SK-N-SH (cell line): ENCODE measurements at regions of chr1 and their contacts with region 1.

Region 1: GRCh38 chr1:200620273-200621131 is at the start of gene KIF14:
- DNase-seq: peak; percentile 97
- H3K4me3 ChIP-seq: peak within 1 kb of the TSS; percentile 86 to 87
- H3K27ac ChIP-seq: peak within 1 kb of the TSS; percentile 48 to 75
- H3K4me1 ChIP-seq: no peaks in the 10 kb centered on the region; a peak in 2 of 4 replicates
- H3K27me3 ChIP-seq: no peaks in the 10 kb centered on the region
- CTCF ChIP-seq: no peak
- EP300 ChIP-seq: no peak
- RAD21 ChIP-seq: no peak
- polyA plus RNA-seq, gene KIF14: 1.2 and 1.4 TPM in 2 replicates

Region 2: DNA sequence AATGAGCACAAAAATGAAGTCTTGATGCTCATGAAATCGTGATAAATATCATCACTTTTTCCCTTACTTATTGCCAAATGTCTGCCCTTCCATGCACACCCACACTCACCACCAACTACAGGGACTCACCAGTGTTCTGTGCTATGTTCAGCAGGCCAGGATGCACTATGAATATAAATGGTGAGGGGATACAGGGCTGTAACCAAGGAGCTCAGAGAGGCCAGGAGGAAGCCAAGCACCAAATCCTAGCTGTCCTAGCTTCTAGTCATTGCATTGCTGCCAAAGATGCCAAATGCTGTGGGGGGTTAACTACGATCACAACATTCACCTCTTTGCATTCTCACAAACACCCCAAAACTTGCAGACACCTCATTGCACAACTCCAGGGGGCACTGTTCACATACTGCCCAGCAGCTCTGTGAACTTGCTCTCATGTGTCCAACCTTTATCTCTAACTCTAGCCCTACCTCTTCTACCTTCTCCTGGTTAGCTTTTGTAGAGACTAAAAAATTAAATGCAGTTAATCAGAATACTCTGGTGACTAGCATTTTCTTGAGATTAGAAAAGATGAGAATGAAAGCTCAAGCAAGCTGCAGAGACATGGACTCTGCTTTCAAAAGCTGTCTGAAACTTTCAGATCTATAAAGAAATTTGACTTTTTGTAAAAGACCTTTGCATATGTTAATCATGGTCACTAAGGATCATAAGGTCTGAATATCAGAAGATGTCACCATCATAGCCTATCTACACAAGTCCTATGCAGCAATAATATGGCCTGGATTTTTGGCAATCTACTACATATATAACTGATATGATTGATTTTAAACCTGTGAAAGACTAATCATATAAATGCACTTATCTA is 14.0 kb after region 1 on chr1:
- CTCF ChIA-PET with region 1: interaction called, 32 read pairs
- POLR2A ChIA-PET with region 1: no interaction called
- DNase-seq: no peak
- H3K4me3 ChIP-seq: no peak overlapping the region
- H3K27ac ChIP-seq: no peak overlapping the region
- H3K4me1 ChIP-seq: peaks cover 0 to under 1% of the 10 kb centered on the region in 2 experiments; a peak in 1 of 4 replicates
- H3K27me3 ChIP-seq: no peaks in the 10 kb centered on the region
- CTCF ChIP-seq: peak; percentile 20; the same call in 1 of the 2 replicates
- EP300 ChIP-seq: no peak
- RAD21 ChIP-seq: peak; percentile 32; the same call in 1 of the 2 replicates

Region 3: DNA sequence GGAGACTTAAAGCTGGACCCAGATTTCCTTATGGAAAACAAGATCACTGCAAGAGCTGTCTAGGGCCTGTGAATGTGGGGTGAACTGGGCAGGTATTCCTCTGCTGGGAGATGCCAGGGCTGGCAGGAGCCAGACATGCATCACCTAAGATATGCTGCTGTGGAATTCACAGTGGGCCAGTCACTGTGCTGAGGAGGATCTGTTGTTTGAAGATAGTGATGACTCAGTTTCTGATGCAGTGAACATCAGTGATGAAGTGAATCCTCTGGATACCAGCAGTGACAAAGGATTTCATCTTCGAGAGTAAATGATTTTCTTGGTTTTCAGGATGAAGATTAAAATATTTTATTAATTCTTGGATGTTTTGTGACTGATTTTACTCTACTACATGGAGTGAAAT is 88.3 kb after region 1 on chr1:
- CTCF ChIA-PET with region 1: no interaction called
- POLR2A ChIA-PET with region 1: no interaction called
- DNase-seq: no peak
- H3K4me3 ChIP-seq: no peak overlapping the region
- H3K27ac ChIP-seq: no peak overlapping the region
- H3K4me1 ChIP-seq: peaks cover 2 to 7% of the 10 kb centered on the region in 2 experiments; a peak in 2 of 4 replicates
- H3K27me3 ChIP-seq: no peaks in the 10 kb centered on the region
- CTCF ChIP-seq: no peak
- EP300 ChIP-seq: no peak
- RAD21 ChIP-seq: no peak

Region 4: DNA sequence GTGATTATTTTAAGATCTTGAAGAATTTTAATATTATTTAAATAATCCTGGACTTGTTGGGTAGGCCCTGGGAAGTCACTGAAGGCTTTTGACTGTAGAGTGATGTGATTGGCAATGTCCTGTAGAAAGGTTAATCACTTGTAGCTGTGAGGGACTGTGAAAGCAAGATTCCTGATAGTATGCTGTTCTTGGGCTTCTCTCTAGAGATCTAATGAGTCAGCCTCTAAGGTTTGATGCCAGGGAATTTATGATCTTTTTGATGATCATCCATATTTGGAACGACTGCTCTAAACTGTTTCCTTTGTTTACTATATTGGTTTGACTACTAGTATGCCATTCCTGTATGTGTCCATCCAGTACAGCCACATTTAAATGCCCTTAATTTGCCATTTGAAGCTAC is 174.7 kb after region 1 on chr1:
- CTCF ChIA-PET with region 1: interaction called, 18 read pairs
- POLR2A ChIA-PET with region 1: no interaction called
- DNase-seq: no peak
- H3K4me3 ChIP-seq: no peak overlapping the region
- H3K27ac ChIP-seq: peak overlapping the region; percentile 35 to 47; a peak in 3 of 4 replicates
- H3K4me1 ChIP-seq: peaks cover 8 to 14% of the 10 kb centered on the region in 2 experiments; a peak in 3 of 4 replicates
- H3K27me3 ChIP-seq: no peaks in the 10 kb centered on the region
- CTCF ChIP-seq: no peak
- EP300 ChIP-seq: no peak
- RAD21 ChIP-seq: no peak

Region 5: DNA sequence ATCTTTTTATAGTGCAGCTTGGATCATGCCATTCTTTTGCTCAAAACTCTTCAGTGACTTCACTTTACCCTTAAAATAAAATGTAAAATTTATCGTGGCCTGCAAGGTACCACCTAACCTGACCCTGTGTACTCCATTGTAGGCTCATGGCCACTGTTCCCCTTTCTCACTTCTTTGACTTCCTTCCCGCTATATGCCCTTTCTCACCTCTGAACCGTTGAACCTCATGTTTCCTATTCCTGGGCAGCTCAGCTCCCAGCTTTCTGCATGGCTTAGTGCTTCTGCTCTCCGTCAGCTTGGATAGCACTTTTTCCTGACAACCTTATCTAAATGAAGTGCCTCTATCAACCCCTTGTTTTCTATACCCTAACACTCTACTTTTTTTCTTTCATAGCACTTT is 191.2 kb after region 1 on chr1:
- CTCF ChIA-PET with region 1: interaction called, 30 read pairs
- POLR2A ChIA-PET with region 1: no interaction called
- DNase-seq: no peak
- H3K4me3 ChIP-seq: no peak overlapping the region
- H3K27ac ChIP-seq: no peak overlapping the region
- H3K4me1 ChIP-seq: peaks cover 0 to 3% of the 10 kb centered on the region in 2 experiments; a peak in 1 of 4 replicates
- H3K27me3 ChIP-seq: no peaks in the 10 kb centered on the region
- CTCF ChIP-seq: no peak
- EP300 ChIP-seq: no peak
- RAD21 ChIP-seq: no peak

Region 6: GRCh38 chr1:201114236-201115131 is 494.0 kb after region 1 on chr1:
- CTCF ChIA-PET with region 1: interaction called, 16 read pairs
- POLR2A ChIA-PET with region 1: no interaction called
- DNase-seq: peak; percentile 97
- H3K4me3 ChIP-seq: peak overlapping the region; percentile 65 to 97
- H3K27ac ChIP-seq: peak overlapping the region in 1 of 2 experiments; percentile 39; a peak in 1 of 4 replicates
- H3K4me1 ChIP-seq: peaks cover 0 to 7% of the 10 kb centered on the region in 2 experiments; a peak in 1 of 4 replicates
- H3K27me3 ChIP-seq: peaks cover 5% of the 10 kb centered on the region; the same call in 1 of the 2 replicates
- CTCF ChIP-seq: peak; percentile 85
- EP300 ChIP-seq: no peak
- RAD21 ChIP-seq: peak; percentile 95